Left ventricle myocardium inferior (tissue), 1 donor: ENCODE measurements at regions of chr1 and their contacts with region 1.

Region 1: GRCh38 chr1:146012737-146013403 is 8.7 kb downstream of the HJV start:
- DNase-seq: no peak
- H3K4me3 ChIP-seq: no peak overlapping the region
- H3K27ac ChIP-seq: no peak overlapping the region
- H3K4me1 ChIP-seq: peaks cover 33% of the 10 kb centered on the region
- H3K27me3 ChIP-seq: no peaks in the 10 kb centered on the region
- CTCF ChIP-seq: peak; percentile 82

Region 2: DNA sequence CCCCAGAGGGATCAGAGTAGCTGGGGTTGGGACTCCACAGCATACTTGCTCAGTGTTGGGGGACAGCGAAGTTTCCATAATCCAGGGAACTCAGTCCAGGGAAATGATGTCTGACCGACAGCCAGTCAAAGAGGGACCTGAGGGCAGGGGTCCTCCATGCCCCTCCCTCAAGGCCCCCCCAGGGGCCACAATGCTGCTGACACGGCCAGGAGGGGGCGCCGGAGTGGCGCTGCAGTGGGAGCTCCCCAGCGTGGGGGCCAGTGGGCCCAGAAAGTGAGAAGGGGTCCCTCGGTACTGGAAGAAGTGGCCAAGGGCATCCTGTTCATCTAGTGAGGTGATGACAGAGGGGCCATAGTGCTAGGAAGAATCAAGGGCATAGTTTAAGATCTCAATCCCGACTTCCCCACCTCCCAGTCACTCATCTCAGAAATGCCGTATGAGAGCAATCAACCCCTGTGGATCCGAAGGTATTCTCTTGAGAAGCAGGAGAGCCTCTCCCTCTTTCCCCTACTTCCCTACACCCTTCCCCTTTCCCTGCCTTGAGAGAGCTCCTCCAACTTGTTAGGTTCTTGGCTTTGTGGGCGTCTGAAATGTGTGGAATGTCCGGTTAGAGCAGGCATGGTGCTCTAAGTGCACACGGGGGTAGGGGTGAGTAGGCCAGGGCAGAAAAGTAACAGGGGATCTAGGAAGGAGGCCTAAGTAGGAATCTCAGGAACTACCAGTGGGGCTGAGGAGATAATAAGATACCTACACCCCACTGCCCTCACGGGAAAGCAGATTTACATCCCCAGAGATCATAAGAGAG is 163.3 kb before region 1 on chr1:
- intact Hi-C with region 1: loop called (anchors 5 kb)
- DNase-seq: no peak
- H3K4me3 ChIP-seq: no peak overlapping the region
- H3K27ac ChIP-seq: peak overlapping the region; percentile 16
- H3K4me1 ChIP-seq: peaks cover 17% of the 10 kb centered on the region
- H3K27me3 ChIP-seq: no peaks in the 10 kb centered on the region
- CTCF ChIP-seq: peak; percentile 33

Region 3: GRCh38 chr1:145863282-145864018 is 149.4 kb before region 1 on chr1:
- intact Hi-C with region 1: no loop called
- DNase-seq: no peak
- H3K4me3 ChIP-seq: no peak overlapping the region
- H3K27ac ChIP-seq: no peak overlapping the region
- H3K4me1 ChIP-seq: peaks cover 15% of the 10 kb centered on the region
- H3K27me3 ChIP-seq: no peaks in the 10 kb centered on the region
- CTCF ChIP-seq: no peak

Region 4: DNA sequence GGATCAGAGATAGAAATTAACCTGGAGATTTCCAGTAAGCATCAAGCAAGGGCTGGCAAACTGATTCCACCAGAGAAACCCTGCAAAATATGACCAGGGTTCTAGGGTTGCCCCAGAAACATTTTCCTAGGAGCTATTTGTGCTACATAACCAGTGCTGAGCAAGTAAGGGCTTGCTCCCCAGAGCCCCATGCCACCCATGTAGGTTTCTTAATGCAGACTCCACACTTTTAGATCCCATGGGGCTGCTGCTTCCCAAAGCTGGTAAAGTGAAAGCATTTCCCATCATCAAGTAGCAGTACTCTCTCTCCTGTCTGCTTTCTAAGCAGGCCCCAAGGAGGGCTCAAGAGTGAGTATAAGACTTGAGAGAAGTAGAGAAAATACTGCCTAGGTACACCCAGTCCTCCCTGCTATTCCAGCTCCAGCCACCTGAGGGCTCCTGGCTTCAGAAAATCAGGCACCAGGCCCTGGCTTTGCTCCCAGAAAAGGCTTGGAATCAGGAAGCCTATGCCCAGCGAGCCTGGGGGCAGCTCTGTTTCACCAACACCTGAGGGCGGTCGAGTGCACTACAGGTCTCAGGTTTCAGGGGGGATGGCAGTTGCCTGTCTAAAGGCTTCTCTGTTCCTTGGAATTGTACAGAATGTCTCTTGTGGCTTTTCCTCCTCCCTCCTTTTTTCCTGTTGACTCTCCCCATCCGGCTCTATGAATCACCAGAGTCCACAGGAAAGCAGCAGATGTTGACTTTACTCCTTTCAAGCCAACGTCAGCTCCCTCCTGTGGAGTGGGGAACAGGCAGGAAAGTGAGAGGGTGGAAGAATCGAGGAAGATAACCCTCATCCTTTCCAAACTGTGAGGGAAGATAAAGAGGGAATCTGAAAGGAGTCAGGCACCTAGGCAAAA is 121.0 kb before region 1 on chr1:
- intact Hi-C with region 1: loop called (anchors 10 kb)
- DNase-seq: peak; percentile 89
- H3K4me3 ChIP-seq: peak overlapping the region; percentile 42
- H3K27ac ChIP-seq: peak overlapping the region; percentile 87
- H3K4me1 ChIP-seq: peaks cover 48% of the 10 kb centered on the region
- H3K27me3 ChIP-seq: no peaks in the 10 kb centered on the region
- CTCF ChIP-seq: peak; percentile 98

Region 5: DNA sequence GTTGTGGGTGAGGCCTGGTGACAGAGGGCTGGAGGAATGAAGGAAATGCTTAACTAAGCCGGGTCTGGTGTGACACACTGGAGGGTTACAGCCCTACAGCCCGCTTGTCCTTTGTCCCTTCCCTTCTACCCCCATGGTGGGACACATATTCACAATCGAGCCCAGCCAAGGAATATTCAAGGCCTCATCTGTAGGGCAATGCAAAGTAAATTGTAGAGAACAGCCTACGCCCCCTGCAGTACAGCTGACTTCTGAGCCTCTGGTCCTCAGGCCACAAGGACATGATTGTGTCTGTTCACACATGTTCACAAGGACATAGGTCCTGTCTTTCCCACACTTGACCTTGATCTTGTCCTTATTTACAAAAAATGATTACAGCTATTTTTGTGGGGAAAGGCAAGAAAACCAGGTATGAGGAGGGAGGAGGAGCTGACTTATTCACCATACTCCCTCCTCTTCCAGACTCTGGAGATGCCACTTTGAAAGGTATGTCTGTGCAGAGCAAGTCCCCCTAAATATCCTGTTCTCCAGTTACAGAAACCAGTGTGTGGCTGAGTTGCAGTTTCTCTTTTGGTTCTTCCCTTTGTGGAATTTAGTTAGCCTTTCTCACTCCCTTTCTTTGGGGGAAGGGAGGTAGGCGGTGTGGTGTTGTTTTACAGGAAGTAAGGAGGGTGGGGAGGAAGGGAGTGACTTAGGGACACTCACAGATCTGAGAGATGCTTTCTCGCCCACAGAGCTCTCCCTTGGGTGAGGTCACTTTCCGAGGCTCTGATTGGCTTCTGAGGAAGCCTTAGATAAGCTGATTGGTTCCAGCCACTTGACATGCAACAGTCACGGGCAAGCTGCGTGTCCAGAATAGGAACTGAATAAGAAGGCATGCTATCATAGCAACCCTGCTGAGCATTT is 33.8 kb before region 1 on chr1:
- intact Hi-C with region 1: loop called (anchors 5 kb)
- DNase-seq: peak; percentile 92
- H3K4me3 ChIP-seq: peak overlapping the region; percentile 58
- H3K27ac ChIP-seq: peak overlapping the region; percentile 99
- H3K4me1 ChIP-seq: peaks cover 70% of the 10 kb centered on the region
- H3K27me3 ChIP-seq: no peaks in the 10 kb centered on the region
- CTCF ChIP-seq: peak; percentile 43